GM10248 (cell line): ENCODE measurements at regions of chr18 and their contacts with region 1.

Region 1: DNA sequence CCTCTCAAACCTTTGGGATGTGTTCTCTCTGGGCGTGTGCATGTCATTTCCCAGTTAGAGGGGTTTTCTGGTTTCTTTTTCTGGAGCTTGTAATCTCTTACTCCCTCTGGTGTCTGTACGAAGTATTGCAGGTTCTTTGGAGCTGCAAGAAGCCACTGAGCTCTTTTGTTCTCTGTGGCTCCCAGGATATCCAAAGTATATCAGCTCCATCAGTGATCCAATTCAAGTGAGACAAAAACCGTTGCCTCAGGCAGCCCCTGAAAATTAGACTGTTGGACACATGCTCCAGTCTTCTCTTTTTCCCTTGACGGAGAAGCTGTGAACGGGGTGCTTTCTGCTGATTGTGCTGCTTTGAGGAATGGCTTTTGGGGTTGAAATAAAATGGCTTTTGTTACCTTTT is 59.0 kb upstream of the LDLRAD4 start:
- DNase-seq: peak; percentile 78
- CTCF ChIP-seq: peak; percentile 62

Region 2: DNA sequence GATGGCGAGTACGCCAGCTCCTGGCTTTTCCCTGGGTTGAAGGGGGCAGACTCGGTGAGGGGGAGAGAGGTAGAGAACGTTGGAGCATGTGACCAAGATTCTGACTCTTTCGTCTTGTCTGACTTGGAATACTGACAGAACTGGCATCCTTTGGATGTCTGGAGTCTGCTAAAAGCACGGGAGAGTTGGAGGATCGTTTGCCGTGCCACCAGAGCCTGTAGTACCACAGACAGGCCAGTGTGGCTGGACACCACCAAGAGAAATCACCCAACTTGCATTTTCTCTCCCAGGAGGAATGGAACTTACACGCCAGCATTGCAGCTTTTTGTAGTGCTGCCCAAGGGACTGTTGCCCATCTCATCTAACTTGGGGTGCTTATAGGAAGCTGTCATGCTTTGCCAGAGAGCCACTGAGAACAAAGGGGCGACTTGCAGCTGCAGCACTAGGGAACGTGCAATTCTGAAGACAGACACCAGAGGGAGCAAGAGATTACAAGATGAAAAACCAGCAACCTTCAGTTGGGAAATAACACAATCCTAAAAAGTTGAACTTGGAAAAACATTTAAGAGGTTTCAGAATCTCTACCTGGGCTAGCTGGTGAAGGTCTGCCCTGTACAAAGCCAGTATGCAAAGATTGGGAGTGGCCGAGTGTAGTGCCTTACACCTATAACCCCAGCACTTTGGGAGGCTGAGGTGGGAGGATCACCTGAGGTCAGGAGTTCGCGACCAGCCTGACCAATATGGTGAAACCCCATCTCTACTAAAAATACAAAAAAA is 432.6 kb before region 1 on chr18:
- CTCF ChIA-PET with region 1: interaction called, 14 read pairs
- POLR2A ChIA-PET with region 1: no interaction called
- DNase-seq: peak; percentile 72
- CTCF ChIP-seq: peak; percentile 83

Region 3: GRCh38 chr18:13134551-13135401 is 24.8 kb before region 1 on chr18:
- CTCF ChIA-PET with region 1: interaction called, 12 read pairs
- POLR2A ChIA-PET with region 1: no interaction called
- DNase-seq: no peak
- CTCF ChIP-seq: no peak

Region 4: DNA sequence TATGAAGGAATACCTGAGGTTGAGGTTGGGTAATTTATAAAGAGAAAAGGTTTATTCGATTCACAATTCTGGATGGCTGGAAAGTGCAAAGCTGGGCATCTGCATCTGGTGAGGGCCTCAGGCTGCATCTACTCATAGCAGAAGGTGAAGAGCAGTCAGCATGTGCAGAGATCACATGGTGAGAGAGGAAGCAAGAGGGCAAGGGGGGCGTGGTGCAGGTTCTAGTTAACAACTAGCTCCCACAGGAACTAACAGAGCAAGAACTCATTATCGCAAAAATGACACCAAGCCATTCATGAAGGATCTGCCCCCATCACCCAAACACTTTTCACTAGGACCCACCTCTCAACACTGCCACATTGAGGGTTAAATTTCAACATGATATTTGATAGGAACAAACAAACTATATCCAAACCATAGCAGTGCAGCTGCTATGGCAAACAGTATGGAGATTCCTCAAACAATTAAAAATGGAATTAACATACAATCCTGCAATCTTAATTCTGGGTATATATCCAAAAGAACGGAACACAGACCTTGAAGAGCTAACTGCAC is 13.9 kb before region 1 on chr18:
- CTCF ChIA-PET with region 1: interaction called, 15 read pairs
- POLR2A ChIA-PET with region 1: no interaction called
- DNase-seq: no peak
- CTCF ChIP-seq: no peak